ENCODE measurements at regions of chr12 and their contacts with region 1.

Region 1: GRCh38 chr12:15220994-15221885 is at the start of gene RERG:
- DNase-seq: peak; percentile 94
- total RNA-seq, gene RERG: 98.8 to 107 TPM

Region 2: DNA sequence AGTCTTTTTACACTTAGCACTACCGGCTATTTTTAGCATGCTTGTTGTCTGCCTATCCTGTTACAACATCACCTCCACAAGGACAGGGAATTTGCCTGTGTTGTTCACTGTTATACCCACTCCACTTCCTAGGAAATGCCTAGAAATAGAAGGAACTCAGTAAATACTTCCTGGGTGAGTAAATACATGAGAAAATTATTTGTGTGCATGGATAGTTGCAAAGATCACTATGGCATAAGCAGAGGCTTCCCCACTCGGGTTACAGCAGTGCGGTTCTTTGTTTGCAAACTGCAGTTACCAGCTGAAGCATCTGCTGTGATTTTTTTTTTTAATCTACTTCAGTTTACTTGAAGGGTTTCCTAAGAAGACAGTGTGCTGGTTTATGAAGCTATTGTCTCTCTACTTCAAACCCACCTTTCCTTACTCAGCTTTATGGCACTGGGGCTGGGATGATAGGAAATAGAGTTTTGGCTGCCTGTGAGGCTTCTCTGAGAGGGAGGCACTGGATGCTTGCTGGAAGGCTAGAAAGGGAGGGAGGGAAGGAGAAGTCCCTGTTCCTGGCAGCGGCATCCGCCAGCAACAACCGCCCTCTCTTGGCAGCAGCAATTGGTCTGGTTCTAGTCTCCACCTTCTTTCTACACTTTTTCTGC is 219.4 kb before region 1 on chr12:
- intact Hi-C with region 1: loop called in 1 of 2 experiments (anchors 10 kb)
- DNase-seq: peak; percentile 87

Region 3: DNA sequence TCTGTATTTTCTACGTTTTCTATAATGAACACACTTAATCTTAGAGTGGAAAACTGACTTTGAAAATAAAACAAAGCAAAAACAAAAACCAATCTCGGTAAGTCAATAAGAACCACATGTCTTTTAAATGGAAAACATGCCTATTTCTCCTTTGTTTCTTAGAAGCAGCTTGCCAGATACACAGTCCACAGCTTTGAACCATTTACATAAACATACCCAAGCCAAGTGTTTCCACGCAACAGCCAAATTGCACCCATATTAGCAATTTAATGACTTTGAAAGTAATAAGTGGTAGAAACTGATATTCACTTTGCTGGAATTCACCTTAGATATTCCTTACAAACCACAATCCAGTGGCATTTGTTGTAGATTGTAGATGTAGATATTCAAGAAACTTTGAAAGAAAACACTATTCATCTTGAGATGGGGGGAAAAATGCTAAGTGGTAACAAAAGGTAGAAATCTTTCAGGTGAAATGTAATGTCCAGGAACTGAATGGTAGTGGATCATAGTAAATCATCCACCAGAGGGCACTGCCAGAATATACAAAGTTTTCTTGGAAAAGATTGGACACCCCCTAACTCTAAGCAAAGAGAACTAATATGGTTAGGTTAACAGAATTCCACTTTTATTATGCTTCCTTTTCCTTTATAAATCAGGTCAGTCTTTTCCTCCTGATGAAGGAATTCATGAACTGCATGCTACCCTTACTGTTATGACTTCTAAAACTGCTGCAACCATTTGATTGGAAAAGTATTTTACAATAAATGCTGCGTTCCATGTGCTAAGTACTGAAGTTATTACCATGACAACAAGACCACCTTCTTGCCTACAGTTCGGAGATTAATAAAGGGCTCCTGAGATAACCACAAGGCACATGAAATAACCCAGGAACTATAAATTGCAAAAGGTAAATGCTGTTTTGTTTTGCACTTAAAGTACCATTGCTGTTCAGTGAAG is 69.8 kb before region 1 on chr12:
- intact Hi-C with region 1: loop called in 1 of 2 experiments (anchors 5 kb)
- DNase-seq: no peak

Measured in posterior vena cava (tissue), 2 donors.